ENCODE measurements at regions of chr1 and their contacts with region 1.

Region 1: DNA sequence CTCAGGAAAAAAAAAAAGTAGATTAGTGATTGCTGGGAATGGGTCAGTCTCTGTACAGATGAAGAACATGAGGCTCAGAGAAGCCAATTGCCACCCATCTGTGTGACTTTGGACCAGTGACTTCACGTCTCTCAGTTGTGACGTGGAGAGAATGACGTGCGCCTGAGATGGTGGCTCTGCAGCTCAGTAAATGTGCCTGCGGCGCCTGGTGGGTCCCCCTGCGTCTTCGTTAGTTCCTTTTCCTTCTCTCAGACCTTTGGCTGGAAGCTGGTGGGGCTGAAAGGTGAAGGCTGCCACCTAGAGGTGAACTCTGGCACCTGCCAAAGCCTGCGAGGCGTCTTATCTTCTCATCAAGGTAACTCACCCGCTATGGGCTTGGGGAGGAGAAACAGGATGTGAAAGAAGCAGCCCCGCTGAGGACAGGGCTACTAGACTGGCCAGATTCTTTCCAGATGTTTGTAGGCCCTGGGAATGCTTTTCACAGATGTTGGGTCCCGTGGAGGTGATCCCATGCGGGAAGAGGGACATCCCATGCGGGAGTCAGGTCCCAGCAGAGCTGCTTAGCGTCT is 8.7 kb upstream of the E2F2 start:
- DNase-seq: peak; percentile 92
- H3K4me3 Mint-ChIP-seq: no peak overlapping the region
- H3K27ac Mint-ChIP-seq: peak overlapping the region; percentile 48
- H3K4me1 Mint-ChIP-seq: peaks cover 18% of the 10 kb centered on the region
- H3K27me3 Mint-ChIP-seq: no peaks in the 10 kb centered on the region

Region 2: DNA sequence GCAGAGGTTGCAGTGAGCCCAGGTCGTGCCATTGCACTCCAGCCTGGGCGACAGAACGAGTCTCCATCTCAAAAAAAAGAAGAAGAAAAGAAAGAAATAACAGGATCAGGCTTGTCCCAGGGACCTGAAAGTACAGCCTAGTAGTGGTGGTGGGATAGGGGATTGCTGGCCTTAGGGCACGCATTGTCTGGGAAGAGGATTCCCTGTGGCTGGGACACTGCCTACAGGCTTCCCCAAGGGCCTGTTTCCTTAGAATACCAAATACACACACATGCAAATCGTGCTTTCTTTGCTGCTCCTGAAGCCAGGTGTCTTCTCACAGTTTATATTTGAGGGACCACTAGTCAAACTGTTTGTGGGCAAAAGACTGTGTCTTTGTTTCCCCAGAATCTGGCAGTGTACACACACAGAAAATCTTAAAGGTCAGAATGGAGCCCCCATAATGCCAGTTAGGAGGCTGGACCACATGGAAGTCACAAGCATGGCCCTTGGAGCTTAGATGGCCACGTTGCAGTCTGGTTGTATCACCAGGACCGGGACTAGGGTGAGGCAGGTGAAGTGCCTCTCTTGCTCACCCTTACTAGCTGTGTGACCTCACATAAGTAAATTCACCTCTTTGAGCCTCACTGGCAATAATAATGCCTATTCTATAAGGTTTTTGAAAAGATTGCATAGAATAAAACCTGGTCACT is 43.1 kb before region 1 on chr1:
- intact Hi-C with region 1: loop called (anchors 1 kb)
- DNase-seq: no peak
- H3K4me3 Mint-ChIP-seq: no peak overlapping the region
- H3K27ac Mint-ChIP-seq: no peak overlapping the region
- H3K4me1 Mint-ChIP-seq: no peaks in the 10 kb centered on the region
- H3K27me3 Mint-ChIP-seq: peaks cover 4% of the 10 kb centered on the region

Region 3: GRCh38 chr1:23507507-23507906 is 32.3 kb before region 1 on chr1:
- intact Hi-C with region 1: no loop called
- DNase-seq: no peak
- H3K4me3 Mint-ChIP-seq: no peak overlapping the region
- H3K27ac Mint-ChIP-seq: no peak overlapping the region
- H3K4me1 Mint-ChIP-seq: no peaks in the 10 kb centered on the region
- H3K27me3 Mint-ChIP-seq: no peaks in the 10 kb centered on the region

Region 4: DNA sequence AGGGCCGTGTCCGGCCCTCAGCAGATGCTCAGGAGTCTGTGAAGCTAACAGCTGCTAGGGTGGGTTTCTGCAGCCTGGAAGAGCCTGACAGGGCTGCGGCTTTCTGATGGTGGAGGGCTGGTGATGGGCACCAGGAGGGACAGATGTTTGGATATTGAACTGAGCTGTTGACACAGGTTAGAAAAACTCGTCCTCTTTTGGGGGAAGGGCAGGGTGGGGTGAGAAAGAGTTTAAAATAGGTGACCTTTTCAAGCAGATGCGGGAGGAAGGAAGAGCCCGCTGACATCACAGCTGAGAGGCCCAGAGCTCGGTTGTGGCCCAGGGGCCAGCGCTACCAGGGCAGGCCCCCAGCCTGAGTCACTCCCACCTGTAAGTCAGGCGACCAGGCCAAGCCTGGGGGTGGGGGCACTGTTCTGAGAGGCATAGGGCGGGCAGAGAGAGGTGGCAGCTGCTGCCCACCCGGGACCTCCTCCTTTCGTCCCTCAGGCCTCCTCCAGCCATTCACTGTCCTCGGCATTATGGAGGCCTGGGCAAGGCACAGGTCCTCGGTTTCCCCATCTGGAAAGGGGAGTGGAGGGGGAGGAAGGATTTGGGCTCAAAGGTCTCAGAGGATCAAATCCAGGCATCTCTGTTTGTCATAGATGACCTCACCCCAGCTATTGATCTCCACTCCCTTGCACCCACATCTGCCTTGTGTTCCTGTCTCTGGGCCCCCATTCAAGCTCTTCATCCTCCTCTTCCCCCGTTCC is 51.9 kb after region 1 on chr1:
- intact Hi-C with region 1: no loop called
- DNase-seq: no peak
- H3K4me3 Mint-ChIP-seq: peak overlapping the region; percentile 51
- H3K27ac Mint-ChIP-seq: peak overlapping the region; percentile 95
- H3K4me1 Mint-ChIP-seq: peaks cover 45% of the 10 kb centered on the region
- H3K27me3 Mint-ChIP-seq: no peaks in the 10 kb centered on the region

Region 5: GRCh38 chr1:23619299-23620188 is 79.8 kb after region 1 on chr1:
- intact Hi-C with region 1: no loop called
- DNase-seq: peak; percentile 61
- H3K4me3 Mint-ChIP-seq: peak overlapping the region; percentile 53
- H3K27ac Mint-ChIP-seq: peak overlapping the region; percentile 58
- H3K4me1 Mint-ChIP-seq: peaks cover 57% of the 10 kb centered on the region
- H3K27me3 Mint-ChIP-seq: no peaks in the 10 kb centered on the region